ENCODE measurements at regions of chr2 and their contacts with region 1.

Region 1: DNA sequence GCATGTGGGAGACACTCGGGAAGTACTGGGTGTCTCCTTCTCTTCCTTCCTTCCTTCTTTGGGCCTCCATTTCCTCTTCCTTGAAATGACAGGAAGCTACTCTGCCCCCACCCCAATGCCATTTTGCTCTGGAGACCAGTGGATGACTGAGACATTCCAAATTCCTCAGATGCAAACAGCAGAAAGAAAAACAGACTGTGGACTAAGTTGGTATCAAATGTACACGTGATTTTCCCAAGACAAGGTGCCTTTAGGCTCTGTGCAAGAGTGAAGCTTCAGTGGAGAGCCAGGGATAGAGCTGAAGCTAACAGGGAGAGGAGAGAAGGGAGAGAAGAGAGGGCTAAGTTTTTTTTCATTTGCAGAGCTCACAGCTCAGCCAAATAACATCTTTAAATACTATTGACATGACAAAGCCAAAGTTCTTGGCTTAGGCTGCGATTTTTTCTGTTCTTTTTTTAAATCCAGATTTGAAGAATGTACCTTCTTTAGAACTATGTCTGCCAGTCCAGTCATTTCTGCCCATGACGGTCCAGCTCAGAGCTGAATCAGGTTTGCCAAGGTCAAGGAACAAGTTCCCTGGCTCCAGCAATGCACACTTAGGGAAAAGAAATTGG is 84.5 kb upstream of the LCLAT1 start:
- DNase-seq: no peak
- H3K4me3 ChIP-seq: no peak overlapping the region
- H3K27ac ChIP-seq: no peak overlapping the region
- H3K4me1 ChIP-seq: no peaks in the 10 kb centered on the region
- H3K27me3 ChIP-seq: no peaks in the 10 kb centered on the region
- CTCF ChIP-seq: no peak
- POLR2A ChIP-seq: no peak

Region 2: GRCh38 chr2:30287857-30288513 is 74.6 kb before region 1 on chr2:
- intact Hi-C with region 1: no loop called
- DNase-seq: no peak
- H3K4me3 ChIP-seq: no peak overlapping the region
- H3K27ac ChIP-seq: no peak overlapping the region
- H3K4me1 ChIP-seq: no peaks in the 10 kb centered on the region
- H3K27me3 ChIP-seq: no peaks in the 10 kb centered on the region
- CTCF ChIP-seq: no peak
- POLR2A ChIP-seq: no peak

Region 3: GRCh38 chr2:30300456-30301221 is 61.9 kb before region 1 on chr2:
- intact Hi-C with region 1: loop called (anchors 5 kb)
- DNase-seq: no peak
- H3K4me3 ChIP-seq: no peak overlapping the region
- H3K27ac ChIP-seq: peak overlapping the region in 1 of 2 donors; percentile 15
- H3K4me1 ChIP-seq: no peaks in the 10 kb centered on the region
- H3K27me3 ChIP-seq: no peaks in the 10 kb centered on the region
- CTCF ChIP-seq: no peak
- POLR2A ChIP-seq: no peak

Region 4: GRCh38 chr2:30404319-30404953 is 41.9 kb after region 1 on chr2:
- intact Hi-C with region 1: loop called (anchors 5 kb)
- DNase-seq: no peak
- H3K4me3 ChIP-seq: no peak overlapping the region
- H3K27ac ChIP-seq: no peak overlapping the region
- H3K4me1 ChIP-seq: peaks cover 5% of the 10 kb centered on the region
- H3K27me3 ChIP-seq: no peaks in the 10 kb centered on the region
- CTCF ChIP-seq: no peak
- POLR2A ChIP-seq: no peak

Measured in prostate gland (tissue), 2 donors.